ENCODE measurements at regions of chr19 and their contacts with region 1.

Region 1: GRCh38 chr19:51777570-51778462 is 16.8 kb downstream of the FPR2 start:
- DNase-seq: peak; percentile 87
- ATAC-seq: peak; percentile 98
- H3K4me3 ChIP-seq: no peak overlapping the region
- H3K27ac ChIP-seq: no peak overlapping the region
- H3K4me1 ChIP-seq: no peaks in the 10 kb centered on the region
- H3K27me3 ChIP-seq: peaks cover 18% of the 10 kb centered on the region; the same call in 1 of the 2 replicates
- CTCF ChIP-seq: peak; percentile 91

Region 2: DNA sequence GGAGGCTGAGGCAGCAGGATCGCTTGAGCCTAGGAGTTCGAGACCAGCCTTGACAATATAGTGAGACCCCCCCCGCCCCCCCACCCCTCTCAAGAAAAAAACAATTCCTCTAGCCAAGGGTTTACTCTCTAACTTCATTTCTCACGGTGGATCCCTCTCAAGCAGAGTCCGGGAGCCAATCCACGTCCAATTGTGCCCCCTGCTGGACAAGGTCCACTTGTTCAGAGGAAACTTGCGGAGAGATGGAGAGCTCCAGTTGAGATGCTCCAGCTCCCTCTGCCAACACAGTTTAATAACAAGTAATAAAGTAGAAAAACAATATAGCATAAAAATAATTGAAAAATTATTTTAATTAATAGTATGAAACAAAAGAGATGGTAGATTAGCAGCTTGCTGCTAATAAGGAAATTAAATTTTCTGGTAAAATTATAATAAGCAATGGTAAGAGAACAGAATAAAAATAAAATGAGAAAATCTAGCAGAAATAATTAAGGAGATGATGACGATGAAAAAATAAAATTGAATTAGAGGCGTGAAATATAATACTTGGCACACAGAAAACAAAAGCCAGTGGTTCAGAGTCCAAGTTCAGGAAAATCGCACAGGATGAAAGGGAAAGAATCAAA is 116.7 kb before region 1 on chr19:
- CTCF ChIA-PET with region 1: no interaction called
- POLR2A ChIA-PET with region 1: no interaction called
- intact Hi-C with region 1: loop called (anchors 2 kb)
- DNase-seq: peak; percentile 95
- ATAC-seq: peak; percentile 85
- H3K4me3 ChIP-seq: no peak overlapping the region
- H3K27ac ChIP-seq: no peak overlapping the region
- H3K4me1 ChIP-seq: peaks cover 5% of the 10 kb centered on the region
- H3K27me3 ChIP-seq: peaks cover 18% of the 10 kb centered on the region; the same call in 1 of the 2 replicates
- CTCF ChIP-seq: peak; percentile 69

Region 3: GRCh38 chr19:51681321-51682168 is 96.3 kb before region 1 on chr19:
- CTCF ChIA-PET with region 1: no interaction called
- POLR2A ChIA-PET with region 1: interaction called, 15 read pairs
- intact Hi-C with region 1: no loop called
- DNase-seq: peak; percentile 38
- ATAC-seq: peak; percentile 43
- H3K4me3 ChIP-seq: no peak overlapping the region
- H3K27ac ChIP-seq: no peak overlapping the region
- H3K4me1 ChIP-seq: peaks cover 9% of the 10 kb centered on the region
- H3K27me3 ChIP-seq: no peaks in the 10 kb centered on the region; the same call in 1 of the 2 replicates
- CTCF ChIP-seq: no peak

Region 4: DNA sequence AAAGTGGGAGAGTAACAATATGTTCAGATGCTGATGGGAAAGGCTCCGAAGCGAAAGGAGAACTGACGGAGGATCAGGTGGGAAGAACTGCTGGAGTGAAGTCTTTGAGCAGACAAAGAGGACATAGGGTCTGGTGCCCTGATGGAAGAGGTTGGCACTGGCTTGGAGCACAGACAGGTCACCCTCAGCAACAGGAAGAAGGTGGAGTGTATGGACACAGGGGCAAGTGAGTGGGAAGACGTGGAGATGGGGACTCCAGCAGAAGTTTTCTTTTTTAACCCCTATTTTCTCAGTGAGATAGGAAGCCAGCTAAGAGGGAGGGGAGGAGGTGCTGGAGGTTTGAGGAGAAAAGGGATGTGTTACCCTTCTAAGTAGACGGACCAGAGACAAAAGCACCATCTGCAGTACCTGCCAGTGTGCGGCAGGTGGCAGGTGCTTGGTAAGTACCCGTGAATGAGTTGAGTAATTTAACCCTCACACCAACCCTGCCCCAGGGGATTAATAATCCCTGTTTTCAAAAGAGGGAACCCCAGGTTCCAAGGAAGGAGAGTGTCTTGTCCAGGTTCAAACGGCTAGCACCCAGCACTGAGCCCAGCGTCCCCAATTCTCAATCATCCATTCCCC is 65.2 kb before region 1 on chr19:
- CTCF ChIA-PET with region 1: no interaction called
- POLR2A ChIA-PET with region 1: no interaction called
- intact Hi-C with region 1: loop called (anchors 1 kb)
- DNase-seq: peak; percentile 85
- ATAC-seq: peak; percentile 76
- H3K4me3 ChIP-seq: no peak overlapping the region
- H3K27ac ChIP-seq: no peak overlapping the region
- H3K4me1 ChIP-seq: no peaks in the 10 kb centered on the region
- H3K27me3 ChIP-seq: peaks cover 3% of the 10 kb centered on the region; the same call in 1 of the 2 replicates
- CTCF ChIP-seq: peak; percentile 90

Region 5: DNA sequence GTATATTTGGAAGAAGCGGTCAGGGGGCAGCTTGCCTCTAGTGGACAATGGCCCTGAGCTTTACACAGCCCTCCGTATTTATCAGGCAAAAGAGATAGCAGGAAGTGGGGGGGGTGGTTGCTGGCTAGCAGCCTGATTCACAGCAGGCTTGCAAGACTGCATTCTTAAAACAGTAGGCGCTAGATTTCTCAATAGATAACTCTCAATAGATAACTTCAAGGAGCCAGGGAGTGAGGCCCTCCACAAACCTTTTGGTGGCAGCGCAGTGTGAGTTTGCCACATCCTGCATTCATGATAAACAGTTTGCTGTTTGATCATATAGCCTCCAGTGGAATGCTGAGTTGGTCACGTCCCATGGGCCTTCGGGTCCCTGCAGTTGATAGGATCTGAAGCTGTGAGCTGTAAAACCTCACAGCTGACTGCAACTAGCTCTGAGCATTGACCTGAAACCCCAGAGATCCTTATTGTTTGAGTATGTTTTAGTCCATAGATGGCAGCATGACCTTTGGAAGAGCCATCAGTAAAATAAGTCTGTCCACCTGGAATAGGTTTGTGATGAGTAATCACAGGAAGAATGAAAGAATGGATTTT is 29.4 kb after region 1 on chr19:
- CTCF ChIA-PET with region 1: interaction called, 10 read pairs
- POLR2A ChIA-PET with region 1: no interaction called
- intact Hi-C with region 1: loop called (anchors 1 kb)
- DNase-seq: peak; percentile 89
- ATAC-seq: peak; percentile 64
- H3K4me3 ChIP-seq: no peak overlapping the region
- H3K27ac ChIP-seq: peak overlapping the region; percentile 75
- H3K4me1 ChIP-seq: peaks cover 53% of the 10 kb centered on the region
- H3K27me3 ChIP-seq: no peaks in the 10 kb centered on the region
- CTCF ChIP-seq: peak; percentile 46

Region 6: DNA sequence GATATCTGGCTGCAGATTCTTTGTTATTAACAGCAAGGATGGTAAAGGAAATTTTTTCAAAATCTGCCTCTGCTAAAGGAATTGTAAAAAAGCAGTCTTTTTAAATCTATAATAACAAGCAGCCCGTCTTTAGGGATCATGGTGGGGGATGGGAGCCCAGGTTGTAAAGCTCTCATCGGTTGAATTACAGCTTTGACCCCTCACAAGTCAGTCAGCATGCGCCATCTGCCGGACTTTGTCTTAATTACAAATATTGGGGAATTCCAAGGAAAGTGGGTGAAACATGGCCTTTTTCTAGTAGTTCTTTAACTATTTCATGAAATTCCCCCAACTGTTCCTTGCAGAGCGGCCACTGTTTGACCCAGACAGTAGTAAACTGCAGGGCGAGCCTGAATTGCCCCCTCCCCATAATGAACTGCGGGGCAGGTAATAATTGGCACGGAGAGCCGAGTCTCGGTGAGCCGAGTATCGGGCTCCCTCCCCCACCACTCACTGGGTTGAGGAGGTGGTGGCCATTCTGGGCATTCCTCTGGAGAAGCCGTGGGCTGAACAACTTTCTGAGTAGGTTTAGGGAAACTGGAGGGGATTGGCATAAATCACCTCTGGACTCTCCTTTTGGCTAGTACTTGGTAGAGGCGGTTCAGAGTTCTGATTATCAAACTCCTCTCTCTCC is 687.1 kb after region 1 on chr19:
- CTCF ChIA-PET with region 1: no interaction called
- POLR2A ChIA-PET with region 1: no interaction called
- intact Hi-C with region 1: no loop called
- DNase-seq: no peak
- ATAC-seq: no peak
- H3K4me3 ChIP-seq: no peak overlapping the region
- H3K27ac ChIP-seq: no peak overlapping the region
- H3K4me1 ChIP-seq: no peaks in the 10 kb centered on the region
- H3K27me3 ChIP-seq: no peaks in the 10 kb centered on the region
- CTCF ChIP-seq: peak; percentile 28; the same call in 1 of the 2 replicates

Measured in PC-3 (cell line).